ENCODE measurements at regions of chr5 and their contacts with region 1.

Region 1: GRCh38 chr5:154949781-154950180 is 8.9 kb downstream of the MRPL22 start:
- DNase-seq: no peak
- ATAC-seq: no peak
- H3K4me3 ChIP-seq: no peak overlapping the region
- H3K4me3 Mint-ChIP-seq: no peak overlapping the region
- H3K27ac ChIP-seq: no peak overlapping the region
- H3K27ac Mint-ChIP-seq: no peak overlapping the region
- H3K4me1 ChIP-seq: peaks cover 3% of the 10 kb centered on the region in 2 experiments
- H3K4me1 Mint-ChIP-seq: peaks cover 32 to 39% (median 35%) of the 10 kb centered on the region in 3 donors
- H3K27me3 ChIP-seq: no peaks in the 10 kb centered on the region
- H3K27me3 Mint-ChIP-seq: no peaks in the 10 kb centered on the region

Region 2: DNA sequence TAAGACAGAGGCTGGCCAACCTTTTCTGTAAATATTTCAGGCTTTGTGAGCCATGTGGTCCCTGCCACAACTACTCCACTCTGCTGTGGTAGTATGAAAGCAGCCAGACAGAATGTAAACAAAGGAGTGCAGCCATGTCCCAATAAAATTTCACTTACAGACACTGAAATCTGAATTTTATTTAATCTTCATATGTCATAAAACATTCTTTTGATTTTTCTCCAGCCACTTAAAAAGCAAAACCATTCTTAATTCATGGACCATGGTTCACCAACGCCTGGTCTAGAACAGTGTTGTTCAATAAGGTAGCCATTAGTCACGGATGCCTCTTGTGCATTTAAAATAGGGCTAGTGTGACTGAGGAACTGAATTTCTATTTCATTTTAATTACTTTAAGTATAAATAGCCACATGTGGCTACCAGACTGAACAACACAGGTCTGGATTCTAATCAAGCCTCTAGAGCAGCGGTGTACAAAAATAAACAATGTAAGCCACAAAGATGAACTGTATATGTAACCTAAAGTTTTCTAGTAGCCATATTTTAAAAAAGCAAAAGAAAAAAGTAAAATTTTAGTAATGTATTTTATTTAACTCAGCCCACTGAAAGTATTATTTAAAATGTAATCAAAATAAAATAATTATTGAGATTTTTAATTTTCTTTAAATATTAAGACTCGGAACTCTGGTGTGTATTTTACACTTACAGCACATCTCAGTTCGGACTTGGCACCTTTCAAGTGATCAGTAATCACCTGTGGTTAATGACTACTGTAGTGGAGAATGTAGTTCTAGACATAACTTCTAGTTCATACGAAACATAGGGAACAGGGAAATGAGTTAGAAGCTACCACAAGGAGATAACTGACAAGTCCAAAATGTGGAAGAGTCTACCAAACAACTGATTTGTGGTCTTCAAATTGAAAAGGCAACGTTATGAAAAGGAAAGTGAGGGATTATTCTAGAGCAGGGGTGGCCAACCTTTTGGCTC is 26.0 kb before region 1 on chr5:
- CTCF ChIA-PET with region 1: no interaction called
- POLR2A ChIA-PET with region 1: interaction called in 1 of 2 experiments, 13 read pairs
- DNase-seq: no peak
- ATAC-seq: no peak
- H3K4me3 ChIP-seq: no peak overlapping the region
- H3K4me3 Mint-ChIP-seq: no peak overlapping the region
- H3K27ac ChIP-seq: no peak overlapping the region
- H3K27ac Mint-ChIP-seq: no peak overlapping the region
- H3K4me1 ChIP-seq: no peaks in the 10 kb centered on the region
- H3K4me1 Mint-ChIP-seq: no peaks in the 10 kb centered on the region
- H3K27me3 ChIP-seq: no peaks in the 10 kb centered on the region
- H3K27me3 Mint-ChIP-seq: no peaks in the 10 kb centered on the region

Measured in T-cell (primary cell).